CD14-positive monocyte (primary cell): ENCODE measurements at regions of chr16 and their contacts with region 1.

Region 1: DNA sequence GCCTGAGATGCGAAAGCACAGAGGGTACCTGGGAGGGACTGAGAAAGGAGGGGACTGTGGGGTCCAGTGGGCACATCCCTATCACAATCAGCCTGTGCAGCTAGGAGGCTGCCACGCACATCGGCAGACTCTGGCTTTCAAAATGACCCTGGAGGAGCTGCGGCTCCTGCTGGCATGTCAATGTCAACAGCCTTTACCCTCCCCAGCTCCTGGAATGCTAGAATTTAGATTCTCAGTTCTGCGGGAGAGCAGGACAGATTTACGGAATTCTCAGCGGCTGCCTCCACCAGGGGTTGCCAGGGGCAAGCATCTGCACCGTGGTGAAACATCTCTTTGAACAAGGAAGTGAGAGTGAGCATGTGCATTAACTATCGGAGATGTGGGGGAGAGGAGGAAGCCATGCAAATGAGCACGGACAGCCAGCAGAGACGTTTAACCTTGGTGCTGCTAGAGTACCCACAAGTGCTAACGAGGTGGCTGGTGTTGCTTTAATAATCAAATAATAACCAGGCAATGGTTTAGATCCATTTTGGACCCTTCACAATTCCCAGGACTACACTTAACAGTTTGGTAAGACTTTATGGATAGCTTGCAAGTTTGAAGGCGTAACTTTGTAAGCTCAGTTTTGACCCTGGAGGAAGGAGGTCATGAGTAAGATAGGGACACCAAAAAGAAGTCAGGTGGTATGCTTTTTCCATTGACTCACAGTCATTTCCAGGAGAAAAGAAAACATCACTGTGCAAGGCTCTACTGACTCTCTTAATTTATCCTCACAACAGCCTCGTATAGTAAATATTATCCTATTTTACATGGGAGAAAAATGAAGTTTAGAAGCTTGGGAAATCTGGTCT is 54.1 kb downstream of the XYLT1 start:
- DNase-seq: peak; percentile 81 to 90 (median 88)
- H3K4me3 ChIP-seq: peak overlapping the region in 1 of 3 experiments; percentile 65
- H3K4me3 Mint-ChIP-seq: peak overlapping the region; percentile 61 to 83
- H3K27ac ChIP-seq: peak overlapping the region; percentile 81 to 90
- H3K27ac Mint-ChIP-seq: peak overlapping the region; percentile 87 to 97 (median 93)
- H3K4me1 ChIP-seq: peaks cover 40 to 41% of the 10 kb centered on the region in 2 donors
- H3K4me1 Mint-ChIP-seq: peaks cover 45% of the 10 kb centered on the region
- H3K27me3 ChIP-seq: no peaks in the 10 kb centered on the region
- H3K27me3 Mint-ChIP-seq: peaks cover 0 to 2% (median 0%) of the 10 kb centered on the region in 3 donors
- CTCF ChIP-seq: no peak

Region 2: DNA sequence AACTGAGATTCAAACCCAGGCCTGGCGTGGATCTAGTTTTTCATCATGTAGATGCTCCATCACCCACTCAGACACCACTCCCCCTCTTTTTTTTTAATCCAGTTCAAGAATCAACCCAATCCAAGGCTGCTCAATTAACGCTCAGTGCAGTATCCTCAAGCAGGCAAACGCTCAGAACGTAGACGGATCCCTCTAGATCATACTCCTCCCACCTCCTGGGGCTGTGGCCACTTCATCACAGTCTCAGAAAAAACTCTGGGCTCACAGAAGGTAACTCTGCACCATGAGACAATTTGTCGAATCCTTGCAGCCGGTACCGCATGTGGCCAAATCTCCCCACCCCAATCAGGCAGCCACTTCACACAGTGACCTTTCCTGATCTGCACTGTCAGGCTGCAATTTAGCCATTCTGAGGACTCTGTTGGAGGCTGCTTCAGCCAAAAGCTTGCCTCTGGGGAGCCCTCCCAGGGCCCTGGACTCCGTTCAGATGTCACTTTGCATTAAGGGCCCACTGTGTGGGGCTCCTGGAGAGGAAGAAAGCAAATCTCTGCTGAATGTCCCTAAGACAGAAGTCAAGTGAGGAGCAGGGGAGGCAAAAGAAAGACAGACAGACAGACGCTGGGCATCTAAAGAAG is 129.4 kb before region 1 on chr16:
- intact Hi-C with region 1: no loop called
- DNase-seq: no peak
- H3K4me3 ChIP-seq: no peak overlapping the region
- H3K4me3 Mint-ChIP-seq: no peak overlapping the region
- H3K27ac ChIP-seq: no peak overlapping the region
- H3K27ac Mint-ChIP-seq: peak overlapping the region in 1 of 7 donors; percentile 14
- H3K4me1 ChIP-seq: peaks cover 0 to 7% of the 10 kb centered on the region in 2 donors
- H3K4me1 Mint-ChIP-seq: peaks cover 11% of the 10 kb centered on the region
- H3K27me3 ChIP-seq: no peaks in the 10 kb centered on the region
- H3K27me3 Mint-ChIP-seq: peaks cover 0 to 2% (median 0%) of the 10 kb centered on the region in 3 donors
- CTCF ChIP-seq: no peak

Region 3: DNA sequence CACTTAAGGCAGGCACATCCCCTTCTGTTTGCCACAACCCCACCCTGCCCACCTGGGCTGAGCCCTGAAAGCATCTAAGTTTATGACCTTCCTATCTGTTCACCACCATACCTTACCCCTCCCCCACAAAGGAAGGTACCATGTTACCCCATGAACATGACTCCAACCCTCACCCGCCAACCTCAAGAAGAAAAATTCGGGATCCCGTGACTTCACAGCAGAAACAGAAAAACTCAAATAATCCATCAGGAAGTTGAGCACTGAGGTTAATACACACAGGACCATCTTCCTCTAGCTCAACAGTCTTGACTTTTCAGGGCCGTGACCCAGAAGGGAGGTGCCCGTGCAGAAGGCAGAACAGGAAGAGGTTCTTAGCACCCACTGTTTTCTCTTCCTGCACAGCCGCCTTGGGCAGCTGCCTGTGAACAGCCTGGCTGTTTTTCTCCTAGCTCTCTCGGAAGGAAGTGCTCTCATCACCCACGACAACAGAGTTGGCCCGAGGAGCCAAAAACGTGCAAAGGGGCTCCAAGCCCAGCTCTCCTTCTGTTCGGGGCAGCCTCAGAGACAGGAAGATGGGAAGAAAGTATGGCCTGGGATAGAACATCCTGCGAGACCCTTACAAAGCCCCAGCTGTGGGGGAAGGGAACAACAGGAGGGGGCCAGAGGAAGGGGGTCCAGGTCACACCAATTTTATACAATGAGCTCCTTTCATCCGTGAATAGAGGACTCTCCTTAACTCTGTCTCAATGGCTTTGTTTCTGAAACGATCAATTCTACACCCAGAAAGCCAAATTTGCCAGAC is 47.1 kb before region 1 on chr16:
- intact Hi-C with region 1: loop called in 1 of 2 experiments (anchors 5 kb)
- DNase-seq: peak; percentile 90 to 92 (median 90)
- H3K4me3 ChIP-seq: peak overlapping the region in 1 of 3 experiments; percentile 46
- H3K4me3 Mint-ChIP-seq: peak overlapping the region; percentile 65 to 87
- H3K27ac ChIP-seq: peak overlapping the region; percentile 88 to 96
- H3K27ac Mint-ChIP-seq: peak overlapping the region; percentile 95 to 99 (median 98)
- H3K4me1 ChIP-seq: peaks cover 72 to 75% of the 10 kb centered on the region in 2 donors
- H3K4me1 Mint-ChIP-seq: peaks cover 75% of the 10 kb centered on the region
- H3K27me3 ChIP-seq: no peaks in the 10 kb centered on the region
- H3K27me3 Mint-ChIP-seq: no peaks in the 10 kb centered on the region
- CTCF ChIP-seq: no peak

Region 4: GRCh38 chr16:17377360-17378324 is 39.0 kb before region 1 on chr16:
- intact Hi-C with region 1: loop called in 1 of 2 experiments (anchors 5 kb)
- DNase-seq: peak; percentile 88 to 95 (median 94)
- H3K4me3 ChIP-seq: peak overlapping the region in 2 of 3 experiments; percentile 9 to 12
- H3K4me3 Mint-ChIP-seq: peak overlapping the region; percentile 43 to 65
- H3K27ac ChIP-seq: peak overlapping the region; percentile 90 to 96
- H3K27ac Mint-ChIP-seq: peak overlapping the region; percentile 93 to 99 (median 97)
- H3K4me1 ChIP-seq: peaks cover 74 to 77% of the 10 kb centered on the region in 2 donors
- H3K4me1 Mint-ChIP-seq: peaks cover 78% of the 10 kb centered on the region
- H3K27me3 ChIP-seq: no peaks in the 10 kb centered on the region
- H3K27me3 Mint-ChIP-seq: peaks cover 0 to 2% (median 0%) of the 10 kb centered on the region in 3 donors
- CTCF ChIP-seq: no peak

Region 5: DNA sequence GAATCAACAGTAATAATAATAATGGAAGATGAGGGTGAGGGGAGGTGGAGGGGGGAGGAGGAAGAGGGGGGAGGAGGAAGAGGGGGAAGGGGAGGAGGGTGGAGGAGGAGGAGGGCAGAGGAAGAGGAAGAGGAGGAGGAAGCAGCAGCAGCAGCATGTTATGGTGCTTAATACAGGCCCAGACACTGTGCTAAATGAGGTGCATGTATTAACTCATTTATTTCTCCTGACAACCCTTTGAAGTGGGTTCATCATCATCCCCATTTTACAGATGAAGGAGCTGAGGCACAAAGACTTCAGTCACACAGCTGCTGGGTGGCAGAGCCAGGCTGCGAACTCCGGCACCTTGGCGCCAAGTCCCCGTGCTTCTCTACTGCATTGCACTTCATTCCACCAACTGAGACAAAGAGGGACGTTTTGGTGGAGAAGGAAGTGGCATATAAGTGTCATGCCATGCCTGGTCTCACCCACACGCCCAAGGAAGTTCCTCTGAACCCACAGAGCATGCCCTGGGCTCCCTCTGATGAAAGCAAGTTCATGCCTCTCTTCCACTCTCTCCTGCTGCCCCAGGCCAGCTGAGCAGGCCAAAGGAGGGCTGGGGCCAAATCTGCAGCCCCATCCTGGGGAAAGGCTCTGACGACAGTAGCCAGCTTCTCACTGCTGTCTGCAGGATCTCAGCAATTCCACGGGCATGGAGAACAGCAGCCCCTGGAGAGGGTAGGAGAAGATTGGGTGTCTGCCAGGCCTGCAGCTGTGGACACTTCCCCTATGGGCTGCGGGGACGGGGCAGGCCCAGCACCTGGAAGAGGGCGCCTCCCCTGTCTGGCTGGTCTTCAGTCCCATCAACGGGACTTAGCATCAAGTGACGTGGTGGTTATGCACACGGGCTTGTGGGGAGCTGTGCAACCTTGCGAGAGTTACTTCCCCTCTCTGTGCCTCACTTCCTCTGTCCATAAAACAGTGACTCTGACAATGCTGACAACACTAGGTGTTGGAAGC is 32.3 kb after region 1 on chr16:
- intact Hi-C with region 1: loop called in 1 of 2 experiments (anchors 2 kb)
- DNase-seq: peak; percentile 86 to 95 (median 93)
- H3K4me3 ChIP-seq: peak overlapping the region in 1 of 3 experiments; percentile 44
- H3K4me3 Mint-ChIP-seq: peak overlapping the region; percentile 31 to 69
- H3K27ac ChIP-seq: peak overlapping the region; percentile 79 to 96
- H3K27ac Mint-ChIP-seq: peak overlapping the region; percentile 94 to 98 (median 96)
- H3K4me1 ChIP-seq: peaks cover 63 to 67% of the 10 kb centered on the region in 2 donors
- H3K4me1 Mint-ChIP-seq: peaks cover 62% of the 10 kb centered on the region
- H3K27me3 ChIP-seq: no peaks in the 10 kb centered on the region
- H3K27me3 Mint-ChIP-seq: peaks cover 0 to 3% (median 2%) of the 10 kb centered on the region in 3 donors
- CTCF ChIP-seq: no peak

Region 6: GRCh38 chr16:17467923-17468540 is 51.3 kb after region 1 on chr16:
- intact Hi-C with region 1: loop called (anchors 5 to 10 kb)
- DNase-seq: peak in 2 of 3 donors; percentile 42 to 49
- H3K4me3 ChIP-seq: peak overlapping the region in 2 of 3 experiments; percentile 87 to 92
- H3K4me3 Mint-ChIP-seq: peak overlapping the region; percentile 96 to 98
- H3K27ac ChIP-seq: no peak overlapping the region
- H3K27ac Mint-ChIP-seq: peak overlapping the region in 3 of 7 donors; percentile 35 to 83 (median 51)
- H3K4me1 ChIP-seq: peaks cover 43 to 48% of the 10 kb centered on the region in 2 donors
- H3K4me1 Mint-ChIP-seq: peaks cover 52% of the 10 kb centered on the region
- H3K27me3 ChIP-seq: no peaks in the 10 kb centered on the region
- H3K27me3 Mint-ChIP-seq: peaks cover 4 to 9% (median 8%) of the 10 kb centered on the region in 3 donors
- CTCF ChIP-seq: peak; percentile 59

Region 7: GRCh38 chr16:17497648-17498047 is 81.0 kb after region 1 on chr16:
- intact Hi-C with region 1: no loop called
- DNase-seq: no peak
- H3K4me3 ChIP-seq: no peak overlapping the region
- H3K4me3 Mint-ChIP-seq: no peak overlapping the region
- H3K27ac ChIP-seq: no peak overlapping the region
- H3K27ac Mint-ChIP-seq: no peak overlapping the region
- H3K4me1 ChIP-seq: peaks cover 6 to 7% of the 10 kb centered on the region in 2 donors
- H3K4me1 Mint-ChIP-seq: peaks cover 14% of the 10 kb centered on the region
- H3K27me3 ChIP-seq: no peaks in the 10 kb centered on the region
- H3K27me3 Mint-ChIP-seq: peaks cover 0 to 6% (median 2%) of the 10 kb centered on the region in 3 donors
- CTCF ChIP-seq: no peak

Region 8: DNA sequence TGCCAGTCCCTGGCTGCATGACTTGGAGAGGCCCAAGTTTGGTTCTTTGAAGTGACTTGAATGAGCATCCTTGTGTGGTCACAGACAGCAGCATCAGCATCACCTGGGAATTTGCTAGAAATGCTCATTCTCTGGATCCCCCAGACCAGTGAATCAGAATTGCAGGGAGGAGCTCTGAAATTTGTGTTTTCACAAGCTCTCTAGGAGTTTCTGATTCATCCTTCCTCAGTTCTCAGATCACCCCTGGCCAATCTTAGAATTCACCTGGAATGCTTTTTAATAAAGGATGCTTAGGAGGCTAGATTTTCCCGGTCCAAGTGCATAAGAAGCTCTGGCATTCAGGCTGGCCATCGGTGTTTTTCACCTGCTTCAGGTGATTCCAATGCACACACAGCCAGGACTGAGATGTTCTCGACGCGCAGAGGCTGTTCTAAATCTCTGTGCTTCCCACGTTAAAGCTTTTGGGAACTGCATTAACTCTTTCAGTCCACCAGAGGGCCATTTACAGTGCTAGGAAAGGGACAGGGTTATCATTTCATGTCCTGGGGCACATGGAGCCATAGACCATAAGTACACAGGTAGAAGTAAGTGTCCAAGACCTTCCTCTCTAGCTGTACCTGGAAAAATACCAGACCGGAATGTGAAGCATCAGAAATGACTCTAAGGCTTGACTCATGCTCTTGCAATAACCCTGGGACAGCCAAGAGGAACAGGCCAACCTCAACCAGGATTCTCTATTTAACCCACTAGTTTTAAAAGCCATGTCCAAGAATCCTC is 139.8 kb after region 1 on chr16:
- intact Hi-C with region 1: no loop called
- DNase-seq: no peak
- H3K4me3 ChIP-seq: no peak overlapping the region
- H3K4me3 Mint-ChIP-seq: no peak overlapping the region
- H3K27ac ChIP-seq: no peak overlapping the region
- H3K27ac Mint-ChIP-seq: no peak overlapping the region
- H3K4me1 ChIP-seq: no peaks in the 10 kb centered on the region
- H3K4me1 Mint-ChIP-seq: no peaks in the 10 kb centered on the region
- H3K27me3 ChIP-seq: no peaks in the 10 kb centered on the region
- H3K27me3 Mint-ChIP-seq: peaks cover 2 to 8% (median 5%) of the 10 kb centered on the region in 3 donors
- CTCF ChIP-seq: peak; percentile 56